ENCODE measurements at regions of chr2 and their contacts with region 1.

Region 1: DNA sequence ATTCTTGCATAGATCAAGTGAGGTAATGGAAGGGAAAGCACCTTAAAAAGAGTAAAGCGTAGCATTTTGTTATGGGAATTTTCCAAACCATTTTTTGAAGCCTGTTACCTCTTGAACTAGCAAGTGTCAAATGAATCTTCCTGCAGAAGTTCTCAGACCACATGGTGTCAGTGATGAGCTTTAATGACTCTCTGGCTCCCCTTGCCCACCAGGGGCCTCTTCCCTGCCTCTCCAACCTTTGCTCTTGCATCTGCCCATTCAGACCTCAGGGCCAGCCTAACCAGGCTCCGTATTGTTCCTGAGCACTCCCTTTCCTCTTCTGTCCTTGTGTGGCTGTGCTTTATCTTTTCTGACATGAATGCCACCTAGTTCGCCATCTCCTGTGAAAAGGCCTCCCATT is 155.9 kb downstream of the DIS3L2 start:
- DNase-seq: no peak
- H3K4me3 ChIP-seq: no peak overlapping the region
- CTCF ChIP-seq: no peak

Region 2: DNA sequence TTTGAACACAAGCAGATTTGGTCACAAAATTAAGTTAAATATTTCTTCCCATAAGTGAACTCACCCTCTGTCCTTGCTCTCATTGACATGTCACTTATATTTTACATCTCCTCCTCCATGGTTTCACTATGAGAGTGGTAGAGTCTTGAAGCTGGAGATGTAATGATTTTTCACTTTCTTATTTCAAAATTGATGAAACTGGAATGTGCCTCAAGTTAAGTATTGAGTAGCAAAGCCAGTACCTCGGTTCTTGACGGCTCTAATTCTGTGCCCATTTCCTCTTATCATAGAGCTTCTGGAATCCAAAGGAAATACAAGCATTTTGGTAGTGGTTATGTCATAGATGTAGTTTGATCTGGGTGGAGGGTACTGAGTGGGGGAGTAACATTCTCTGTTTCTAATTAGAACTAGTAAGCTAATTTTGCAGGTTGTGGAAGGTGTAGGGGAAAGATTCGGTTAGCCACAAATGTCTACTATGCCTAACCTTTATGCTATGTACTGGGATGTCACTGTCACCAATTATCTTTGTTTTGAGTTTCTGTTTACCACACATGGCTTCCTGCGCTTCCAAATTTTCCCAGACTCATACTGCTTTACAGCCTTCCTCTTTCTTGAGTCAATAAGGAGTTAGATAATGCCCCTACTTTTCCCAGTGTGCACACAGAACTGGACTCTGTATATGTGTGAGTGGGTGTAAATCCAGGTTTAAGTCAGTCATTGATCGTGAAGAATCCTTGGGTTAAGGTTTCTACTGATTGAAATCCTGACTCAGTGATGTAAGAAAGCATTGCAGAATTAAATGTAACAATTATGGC is 59.1 kb before region 1 on chr2:
- in situ Hi-C with region 1: no loop called
- DNase-seq: no peak
- H3K4me3 ChIP-seq: no peak overlapping the region
- CTCF ChIP-seq: no peak

Region 3: DNA sequence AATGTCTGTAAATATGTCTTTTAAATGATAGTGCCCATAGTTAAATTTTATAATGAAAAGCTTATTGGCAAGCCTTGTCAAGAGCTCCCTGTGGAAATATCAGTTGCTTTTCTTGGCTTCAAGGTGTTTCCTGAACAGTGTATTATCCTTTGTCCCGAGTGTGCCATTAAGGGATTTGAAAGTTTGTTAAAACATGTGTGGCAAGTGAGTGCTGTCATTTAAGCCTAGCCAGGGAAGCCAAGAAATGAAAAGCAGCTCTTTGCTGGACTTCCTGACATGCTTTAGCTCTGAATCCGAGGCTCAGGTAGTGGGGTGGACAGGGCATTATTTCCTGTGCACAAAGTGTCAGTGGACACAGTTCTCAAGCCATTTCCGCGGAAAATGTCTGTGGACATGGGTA is 44.4 kb before region 1 on chr2:
- in situ Hi-C with region 1: loop called (anchors 5 kb)
- DNase-seq: no peak
- H3K4me3 ChIP-seq: no peak overlapping the region
- CTCF ChIP-seq: no peak

Region 4: GRCh38 chr2:233353769-233354499 is 1236.5 kb after region 1 on chr2 and contains the start of gene DGKD:
- in situ Hi-C with region 1: no loop called
- DNase-seq: no peak
- H3K4me3 ChIP-seq: peak within 1 kb of the TSS; percentile 64
- CTCF ChIP-seq: no peak